IMR-90 (cell line): ENCODE measurements at regions of chr2 and their contacts with region 1.

Region 1: DNA sequence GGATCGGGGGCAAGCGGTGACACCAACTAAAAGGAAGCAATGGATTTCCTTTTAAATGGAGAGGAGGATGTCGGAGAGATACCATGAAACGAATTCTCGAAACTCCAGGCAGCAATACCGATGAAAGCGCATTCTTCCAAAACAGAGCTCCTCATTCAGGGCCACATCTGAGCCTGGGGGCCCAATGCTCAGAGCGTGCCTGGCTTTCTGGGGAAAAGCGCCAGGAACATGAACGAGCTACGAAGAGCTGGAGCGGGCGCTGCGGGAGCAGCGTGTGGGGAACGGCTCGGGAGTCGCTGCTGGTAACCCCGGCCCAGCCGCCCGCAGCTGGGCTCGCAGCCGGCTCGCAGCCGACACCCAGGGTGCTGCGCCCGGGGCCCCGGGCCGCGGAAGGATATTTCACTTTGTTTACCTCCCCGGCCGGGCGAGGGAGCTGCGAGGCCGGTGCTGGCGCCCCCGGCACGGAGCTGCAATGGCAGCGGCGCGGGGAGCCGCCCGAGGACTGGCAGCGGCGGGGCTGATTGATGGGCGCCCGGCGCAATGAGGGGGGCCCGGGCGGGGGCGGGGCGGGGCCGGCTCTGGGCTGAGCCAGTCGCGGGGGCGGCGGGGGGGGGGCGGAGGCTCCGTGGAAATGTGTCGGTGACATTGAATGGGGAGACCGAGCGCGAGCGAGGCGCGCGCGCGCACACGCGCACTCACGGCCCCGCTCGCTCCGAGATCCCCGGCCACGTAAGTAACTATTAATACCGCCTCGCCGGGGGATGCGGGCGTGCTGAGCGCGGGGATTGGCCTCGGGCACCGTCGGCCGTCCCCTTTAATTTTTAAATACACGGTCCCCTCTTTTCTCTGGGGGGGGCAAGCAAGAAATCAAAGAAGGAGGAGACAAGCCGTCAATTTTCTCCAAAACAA is at the start of gene TRIB2:
- DNase-seq: peak; percentile 84
- ATAC-seq: peak; percentile 78
- H3K4me3 ChIP-seq: peak within 1 kb of the TSS; percentile 92
- H3K27ac ChIP-seq: peak within 1 kb of the TSS; percentile 98
- H3K4me1 ChIP-seq: peaks cover 14% of the 10 kb centered on the region
- H3K27me3 ChIP-seq: no peaks in the 10 kb centered on the region
- CTCF ChIP-seq: peak; percentile 24; the same call in 1 of the 2 replicates
- POLR2A ChIP-seq: peak; percentile 15; the same call in 1 of the 2 replicates
- RAD21 ChIP-seq: peak; percentile 39
- total RNA-seq, gene TRIB2: 12.7 and 16.1 TPM in 2 replicates

Region 2: GRCh38 chr2:12005886-12006681 is 710.5 kb before region 1 on chr2:
- CTCF ChIA-PET with region 1: no interaction called
- POLR2A ChIA-PET with region 1: no interaction called
- dilution Hi-C with region 1: no loop called
- in situ Hi-C with region 1: no loop called
- intact Hi-C with region 1: loop called (anchors 5 kb)
- DNase-seq: no peak
- ATAC-seq: no peak
- H3K4me3 ChIP-seq: no peak overlapping the region
- H3K27ac ChIP-seq: no peak overlapping the region
- H3K4me1 ChIP-seq: peaks cover 5% of the 10 kb centered on the region; the same call in 1 of the 2 replicates
- H3K27me3 ChIP-seq: no peaks in the 10 kb centered on the region
- CTCF ChIP-seq: no peak
- POLR2A ChIP-seq: no peak
- RAD21 ChIP-seq: no peak

Region 3: DNA sequence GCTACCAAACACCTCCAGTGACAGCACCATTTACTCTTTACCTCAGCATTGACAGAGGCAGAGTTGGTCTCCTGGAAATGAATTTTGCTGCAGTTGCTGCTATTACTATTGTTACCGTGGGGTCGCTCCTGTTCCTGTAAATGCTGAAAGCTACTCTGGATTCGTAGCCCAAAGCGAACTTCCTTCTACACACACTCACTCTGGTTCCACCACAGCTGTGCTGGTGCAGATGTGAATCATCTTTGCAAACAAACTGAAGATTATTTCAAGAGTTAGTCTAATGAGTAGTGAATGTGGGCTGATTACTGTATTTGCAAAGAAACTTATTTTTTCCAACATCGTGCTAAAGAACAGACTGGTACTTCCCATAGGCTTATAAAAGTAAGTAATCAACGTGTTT is 666.1 kb before region 1 on chr2:
- CTCF ChIA-PET with region 1: interaction called, 3 read pairs
- POLR2A ChIA-PET with region 1: no interaction called
- dilution Hi-C with region 1: no loop called
- in situ Hi-C with region 1: loop called (anchors 10 kb)
- intact Hi-C with region 1: loop called (anchors 2 kb)
- DNase-seq: peak; percentile 94
- ATAC-seq: peak; percentile 80
- H3K4me3 ChIP-seq: no peak overlapping the region
- H3K27ac ChIP-seq: peak overlapping the region; percentile 64; the same call in 1 of the 2 replicates
- H3K4me1 ChIP-seq: peaks cover 5% of the 10 kb centered on the region
- H3K27me3 ChIP-seq: no peaks in the 10 kb centered on the region
- CTCF ChIP-seq: peak; percentile 46
- POLR2A ChIP-seq: no peak
- RAD21 ChIP-seq: peak; percentile 66

Region 4: GRCh38 chr2:12176623-12177454 is 539.7 kb before region 1 on chr2:
- CTCF ChIA-PET with region 1: no interaction called
- POLR2A ChIA-PET with region 1: no interaction called
- dilution Hi-C with region 1: no loop called
- in situ Hi-C with region 1: no loop called
- intact Hi-C with region 1: loop called (anchors 2 kb)
- DNase-seq: peak; percentile 76
- ATAC-seq: peak; percentile 87
- H3K4me3 ChIP-seq: no peak overlapping the region
- H3K27ac ChIP-seq: no peak overlapping the region; the same call in 1 of the 2 replicates
- H3K4me1 ChIP-seq: peaks cover 11% of the 10 kb centered on the region
- H3K27me3 ChIP-seq: no peaks in the 10 kb centered on the region
- CTCF ChIP-seq: no peak
- POLR2A ChIP-seq: no peak
- RAD21 ChIP-seq: no peak

Region 5: GRCh38 chr2:12416600-12416999 is 299.9 kb before region 1 on chr2:
- CTCF ChIA-PET with region 1: interaction called, 8 read pairs
- POLR2A ChIA-PET with region 1: no interaction called
- dilution Hi-C with region 1: no loop called
- in situ Hi-C with region 1: loop called (anchors 10 kb)
- intact Hi-C with region 1: loop called (anchors 1 kb)
- DNase-seq: peak; percentile 48
- ATAC-seq: peak; percentile 63
- H3K4me3 ChIP-seq: no peak overlapping the region
- H3K27ac ChIP-seq: peak overlapping the region; percentile 20; the same call in 1 of the 2 replicates
- H3K4me1 ChIP-seq: peaks cover 8% of the 10 kb centered on the region
- H3K27me3 ChIP-seq: no peaks in the 10 kb centered on the region
- CTCF ChIP-seq: peak; percentile 53
- POLR2A ChIP-seq: no peak
- RAD21 ChIP-seq: peak; percentile 62

Region 6: DNA sequence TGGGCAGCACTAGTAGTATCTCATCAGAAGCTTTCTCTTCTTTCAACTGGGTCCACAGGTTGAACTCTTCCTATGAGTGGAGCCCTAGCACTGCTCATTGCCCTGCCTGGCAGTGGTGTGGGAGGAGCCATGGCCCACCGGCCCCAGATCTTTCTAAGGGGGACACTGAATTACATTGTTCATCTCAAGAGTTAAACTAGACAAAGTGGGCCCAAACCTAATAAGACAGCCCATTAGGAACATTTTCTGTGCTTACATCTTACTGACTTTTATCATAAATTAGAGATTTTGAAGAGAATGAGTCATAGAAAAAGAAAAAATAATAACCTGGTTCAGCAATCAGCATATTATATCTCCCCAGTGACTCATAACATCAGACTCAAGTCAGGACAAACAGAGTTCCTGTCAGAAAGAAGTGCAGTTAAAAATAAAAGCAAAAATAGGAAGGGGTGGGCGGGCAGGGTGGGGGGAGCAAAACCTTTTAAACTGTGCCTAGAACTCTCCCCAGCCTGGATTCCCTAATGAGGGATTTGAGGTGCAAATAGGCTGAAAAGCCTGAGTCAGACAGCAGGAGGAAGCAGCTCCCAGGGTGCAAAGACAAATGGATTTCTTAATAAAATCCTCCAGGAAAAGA is 161.4 kb before region 1 on chr2:
- CTCF ChIA-PET with region 1: no interaction called
- POLR2A ChIA-PET with region 1: no interaction called
- dilution Hi-C with region 1: no loop called
- in situ Hi-C with region 1: no loop called
- intact Hi-C with region 1: loop called (anchors 5 kb)
- DNase-seq: peak; percentile 80
- ATAC-seq: peak; percentile 69
- H3K4me3 ChIP-seq: no peak overlapping the region
- H3K27ac ChIP-seq: peak overlapping the region; percentile 68
- H3K4me1 ChIP-seq: peaks cover 18% of the 10 kb centered on the region
- H3K27me3 ChIP-seq: no peaks in the 10 kb centered on the region
- CTCF ChIP-seq: no peak
- POLR2A ChIP-seq: no peak
- RAD21 ChIP-seq: no peak

Region 7: GRCh38 chr2:12579018-12579417 is 137.5 kb before region 1 on chr2:
- CTCF ChIA-PET with region 1: no interaction called
- POLR2A ChIA-PET with region 1: no interaction called
- dilution Hi-C with region 1: no loop called
- in situ Hi-C with region 1: no loop called
- intact Hi-C with region 1: no loop called
- DNase-seq: no peak
- ATAC-seq: no peak
- H3K4me3 ChIP-seq: no peak overlapping the region
- H3K27ac ChIP-seq: no peak overlapping the region
- H3K4me1 ChIP-seq: no peaks in the 10 kb centered on the region
- H3K27me3 ChIP-seq: no peaks in the 10 kb centered on the region
- CTCF ChIP-seq: no peak
- POLR2A ChIP-seq: no peak
- RAD21 ChIP-seq: no peak